A549 (cell line): ENCODE measurements at regions of chr12 and their contacts with region 1.

Region 1: GRCh38 chr12:39145175-39145999 is 240.0 kb upstream of the CPNE8 start:
- DNase-seq: peak; percentile 64 to 77
- ATAC-seq: peak; percentile 97 to 100
- H3K4me3 ChIP-seq: peak overlapping the region; percentile 80
- H3K27ac ChIP-seq: peak overlapping the region; percentile 74 to 89; a peak in 5 of 6 replicates
- H3K4me1 ChIP-seq: no peaks in the 10 kb centered on the region
- CTCF ChIP-seq: peak; percentile 78
- EP300 ChIP-seq: no peak
- POLR2A ChIP-seq: no peak
- RAD21 ChIP-seq: peak; percentile 72 to 77

Region 2: DNA sequence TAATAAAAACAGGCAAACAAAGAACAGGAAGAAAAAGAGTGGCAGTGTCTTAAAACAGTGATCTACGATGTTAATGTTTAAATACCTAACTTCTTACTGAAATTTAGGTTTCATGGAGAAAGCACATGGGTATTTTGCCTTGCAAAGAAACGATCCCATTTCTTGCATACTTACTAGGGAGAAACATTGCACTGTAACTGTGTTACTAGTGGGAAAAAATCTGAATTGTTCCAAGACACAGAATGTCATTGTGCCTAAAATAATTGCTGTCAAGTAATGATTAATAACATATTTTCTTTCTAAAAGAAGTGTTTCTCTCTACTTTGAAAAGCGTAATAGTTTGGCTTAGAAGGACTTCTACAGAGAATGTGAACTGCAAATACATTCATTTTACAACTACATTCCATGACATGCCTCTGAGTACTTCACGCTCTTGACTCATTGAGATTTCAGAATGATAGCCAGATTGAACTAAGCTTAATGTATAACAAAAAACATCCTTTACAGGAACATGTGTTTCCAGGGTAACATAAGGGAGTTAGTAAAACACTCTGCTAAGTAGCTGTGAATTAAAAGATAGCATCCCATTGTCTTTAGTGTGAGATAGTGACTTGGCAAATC is 16.2 kb after region 1 on chr12:
- CTCF ChIA-PET with region 1: interaction called, 11 read pairs
- POLR2A ChIA-PET with region 1: no interaction called
- DNase-seq: no peak
- ATAC-seq: no peak
- H3K4me3 ChIP-seq: no peak overlapping the region
- H3K27ac ChIP-seq: no peak overlapping the region
- H3K4me1 ChIP-seq: no peaks in the 10 kb centered on the region
- CTCF ChIP-seq: no peak
- EP300 ChIP-seq: no peak
- POLR2A ChIP-seq: no peak
- RAD21 ChIP-seq: no peak